Activated naive CD4-positive, alpha-beta T cell treated with anti-CD3 and anti-CD28 coated beads, Interleukin-2, amount 10 ng/mL, durations not matched to agents 7 days and 5 days (primary cell): ENCODE measurements at regions of chr1 and their contacts with region 1.

Region 1: DNA sequence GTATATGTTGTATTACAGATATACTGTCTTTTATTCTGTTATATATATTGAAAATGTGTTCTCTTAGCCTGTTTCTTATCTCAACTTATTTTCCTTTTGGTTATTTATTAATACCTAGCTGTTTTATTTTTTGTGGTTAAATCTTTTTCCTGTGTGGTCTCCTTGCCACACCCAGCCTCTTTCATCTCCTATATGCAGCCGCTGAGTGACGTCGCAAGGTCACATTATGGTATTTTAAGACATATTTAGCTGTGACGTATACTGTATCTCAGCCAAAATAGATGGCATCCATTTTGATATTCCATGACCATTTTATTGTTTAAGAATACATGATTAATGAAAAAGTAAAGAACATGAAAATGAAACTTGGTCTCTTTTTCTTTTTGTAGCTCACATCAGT is 29.1 kb downstream of the CENPF start:
- DNase-seq: peak; percentile 65
- H3K4me3 Mint-ChIP-seq: no peak overlapping the region
- H3K27ac Mint-ChIP-seq: peak overlapping the region; percentile 94
- H3K4me1 Mint-ChIP-seq: peaks cover 30% of the 10 kb centered on the region
- H3K27me3 Mint-ChIP-seq: no peaks in the 10 kb centered on the region

Region 2: DNA sequence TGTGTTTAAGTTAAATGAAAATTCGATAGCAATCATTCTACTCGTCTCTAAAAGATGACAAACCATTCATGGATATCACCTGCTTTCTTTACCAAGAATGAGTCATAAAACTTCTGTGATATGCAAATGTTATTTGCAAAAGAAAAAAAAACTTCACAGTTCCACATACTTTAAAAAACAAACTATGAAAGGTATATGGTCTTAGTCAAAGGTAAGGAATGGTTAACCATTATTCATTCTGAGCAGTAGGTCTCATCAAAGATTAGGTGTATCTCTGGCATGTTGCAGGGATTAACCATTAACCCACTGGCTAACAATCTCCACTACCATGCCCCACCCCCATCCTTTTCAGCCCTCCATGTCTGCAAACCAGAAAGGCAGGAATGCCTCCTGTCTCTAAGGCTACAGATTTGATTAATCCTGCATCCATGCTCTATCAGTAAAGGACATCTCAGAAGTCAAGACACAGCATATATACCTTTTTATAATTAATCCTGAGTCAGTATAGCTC is 125.1 kb before region 1 on chr1:
- CTCF ChIA-PET with region 1: no interaction called
- DNase-seq: no peak
- H3K4me3 Mint-ChIP-seq: no peak overlapping the region
- H3K27ac Mint-ChIP-seq: no peak overlapping the region
- H3K4me1 Mint-ChIP-seq: peaks cover 4% of the 10 kb centered on the region
- H3K27me3 Mint-ChIP-seq: peaks cover 15% of the 10 kb centered on the region

Region 3: GRCh38 chr1:214603819-214604252 is 28.3 kb before region 1 on chr1:
- CTCF ChIA-PET with region 1: interaction called, 13 read pairs
- DNase-seq: peak; percentile 27
- H3K4me3 Mint-ChIP-seq: peak overlapping the region; percentile 96
- H3K27ac Mint-ChIP-seq: peak overlapping the region; percentile 94
- H3K4me1 Mint-ChIP-seq: peaks cover 30% of the 10 kb centered on the region
- H3K27me3 Mint-ChIP-seq: no peaks in the 10 kb centered on the region

Region 4: DNA sequence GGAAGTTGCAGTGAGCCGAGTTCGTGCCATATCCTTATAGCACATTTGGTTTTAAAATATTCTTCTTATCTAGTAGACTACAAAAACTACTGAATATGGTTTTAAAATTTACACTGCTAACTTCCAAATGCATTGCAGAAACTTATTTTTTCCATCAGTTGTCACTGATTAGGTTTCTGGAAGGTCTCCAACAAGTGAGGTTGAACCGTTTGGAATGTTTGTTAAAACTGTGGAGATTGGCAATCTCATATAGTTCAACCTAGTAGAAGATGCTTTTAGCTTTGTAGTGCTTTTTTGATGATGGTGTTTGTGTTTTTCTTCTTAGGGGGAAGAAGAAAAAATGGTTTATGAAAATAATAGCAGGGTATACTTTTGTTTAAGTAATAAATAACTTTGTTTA is 16.2 kb before region 1 on chr1:
- CTCF ChIA-PET with region 1: interaction called, 11 read pairs
- DNase-seq: no peak
- H3K4me3 Mint-ChIP-seq: no peak overlapping the region
- H3K27ac Mint-ChIP-seq: peak overlapping the region; percentile 86
- H3K4me1 Mint-ChIP-seq: peaks cover 49% of the 10 kb centered on the region
- H3K27me3 Mint-ChIP-seq: no peaks in the 10 kb centered on the region

Region 5: GRCh38 chr1:214648801-214649200 is 16.7 kb after region 1 on chr1:
- CTCF ChIA-PET with region 1: interaction called, 12 read pairs
- DNase-seq: no peak
- H3K4me3 Mint-ChIP-seq: no peak overlapping the region
- H3K27ac Mint-ChIP-seq: no peak overlapping the region
- H3K4me1 Mint-ChIP-seq: peaks cover 25% of the 10 kb centered on the region
- H3K27me3 Mint-ChIP-seq: no peaks in the 10 kb centered on the region